Sigmoid colon (tissue), 7 donors: ENCODE measurements at regions of chr16 and their contacts with region 1.

Region 1: GRCh38 chr16:85202631-85203461 is 90.6 kb upstream of the CIBAR2 start:
- DNase-seq: peak; percentile 98
- H3K4me3 ChIP-seq: no peak overlapping the region
- H3K27ac ChIP-seq: peak overlapping the region; percentile 77 to 90 (median 83)
- H3K4me1 ChIP-seq: peaks cover 0 to 98% (median 88%) of the 10 kb centered on the region in 4 donors
- H3K27me3 ChIP-seq: no peaks in the 10 kb centered on the region
- CTCF ChIP-seq: no peak
- EP300 ChIP-seq: no peak
- POLR2A ChIP-seq: no peak

Region 2: DNA sequence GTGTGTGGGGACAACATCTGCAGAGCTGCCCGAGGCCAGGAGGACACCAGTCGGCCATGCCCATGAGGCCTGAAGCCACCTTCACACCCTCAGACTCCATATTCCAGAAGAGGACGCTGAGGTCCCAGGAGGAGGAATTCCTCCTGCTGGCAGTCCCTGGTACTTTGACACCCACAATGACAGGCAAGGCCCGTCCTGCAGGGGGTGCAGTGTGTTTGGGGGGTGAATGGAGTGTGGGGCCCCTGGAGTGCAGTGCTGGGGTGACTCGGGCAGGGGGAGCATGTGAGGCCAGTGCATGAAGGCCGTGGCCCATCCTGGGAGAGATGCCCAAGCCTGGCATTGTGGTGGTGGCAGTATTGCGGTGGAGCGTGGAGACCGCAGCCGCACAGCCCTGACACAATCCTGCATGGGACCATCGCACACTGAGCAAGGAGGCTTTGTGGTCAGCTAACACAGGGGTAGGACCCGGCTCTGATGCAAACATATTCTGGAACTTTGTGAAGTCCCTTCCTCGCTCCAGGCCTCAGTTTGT is 243.7 kb before region 1 on chr16:
- intact Hi-C with region 1: no loop called
- DNase-seq: no peak
- H3K4me3 ChIP-seq: no peak overlapping the region
- H3K27ac ChIP-seq: no peak overlapping the region
- H3K4me1 ChIP-seq: peaks cover 0 to 3% (median 0%) of the 10 kb centered on the region in 4 donors
- H3K27me3 ChIP-seq: no peaks in the 10 kb centered on the region
- CTCF ChIP-seq: no peak
- EP300 ChIP-seq: no peak
- POLR2A ChIP-seq: no peak

Region 3: DNA sequence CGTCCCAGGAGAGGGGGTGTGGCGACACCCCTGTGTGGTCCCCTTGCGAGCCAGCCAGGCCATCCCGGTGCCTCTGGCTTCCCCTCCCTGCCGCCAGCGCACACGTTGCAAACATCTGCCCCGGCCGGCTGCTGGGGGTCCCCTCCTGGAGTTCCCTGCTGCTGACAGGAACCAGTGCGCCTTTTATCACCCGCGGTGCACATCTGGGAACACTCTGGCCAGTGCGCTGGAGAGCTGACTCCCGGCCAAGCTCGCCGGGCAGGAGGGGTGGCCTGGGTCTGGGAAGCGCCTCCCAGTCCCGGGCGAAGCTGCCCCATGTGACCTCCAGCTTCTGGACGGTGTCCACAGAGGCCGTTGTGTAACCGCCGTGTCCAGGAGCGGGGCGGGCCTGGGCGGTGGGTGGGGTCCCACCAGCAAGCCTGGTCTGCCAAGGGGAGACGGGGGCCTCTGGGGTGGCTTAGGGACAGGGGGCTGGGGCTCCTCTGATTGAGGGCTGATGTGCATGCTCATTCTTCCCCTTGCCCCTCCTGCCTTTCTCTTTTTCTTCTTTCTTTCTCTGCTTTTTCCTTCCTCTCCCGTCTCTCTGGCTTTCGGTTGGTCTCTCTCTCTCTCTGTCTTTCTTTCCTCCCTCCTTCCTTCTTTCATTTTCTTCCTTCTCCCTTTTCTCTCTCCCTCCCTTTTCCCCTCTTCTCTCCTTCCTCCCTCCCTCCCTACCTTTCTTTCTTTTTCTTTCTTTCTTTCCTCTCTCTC is 65.3 kb before region 1 on chr16:
- intact Hi-C with region 1: loop called (anchors 5 kb)
- DNase-seq: peak; percentile 99
- H3K4me3 ChIP-seq: peak overlapping the region; percentile 20 to 42 (median 35)
- H3K27ac ChIP-seq: peak overlapping the region; percentile 72 to 85 (median 80)
- H3K4me1 ChIP-seq: peaks cover 0 to 34% (median 30%) of the 10 kb centered on the region in 4 donors
- H3K27me3 ChIP-seq: no peaks in the 10 kb centered on the region
- CTCF ChIP-seq: no peak
- EP300 ChIP-seq: peak in 2 of 4 donors; percentile 79 to 87
- POLR2A ChIP-seq: no peak

Region 4: DNA sequence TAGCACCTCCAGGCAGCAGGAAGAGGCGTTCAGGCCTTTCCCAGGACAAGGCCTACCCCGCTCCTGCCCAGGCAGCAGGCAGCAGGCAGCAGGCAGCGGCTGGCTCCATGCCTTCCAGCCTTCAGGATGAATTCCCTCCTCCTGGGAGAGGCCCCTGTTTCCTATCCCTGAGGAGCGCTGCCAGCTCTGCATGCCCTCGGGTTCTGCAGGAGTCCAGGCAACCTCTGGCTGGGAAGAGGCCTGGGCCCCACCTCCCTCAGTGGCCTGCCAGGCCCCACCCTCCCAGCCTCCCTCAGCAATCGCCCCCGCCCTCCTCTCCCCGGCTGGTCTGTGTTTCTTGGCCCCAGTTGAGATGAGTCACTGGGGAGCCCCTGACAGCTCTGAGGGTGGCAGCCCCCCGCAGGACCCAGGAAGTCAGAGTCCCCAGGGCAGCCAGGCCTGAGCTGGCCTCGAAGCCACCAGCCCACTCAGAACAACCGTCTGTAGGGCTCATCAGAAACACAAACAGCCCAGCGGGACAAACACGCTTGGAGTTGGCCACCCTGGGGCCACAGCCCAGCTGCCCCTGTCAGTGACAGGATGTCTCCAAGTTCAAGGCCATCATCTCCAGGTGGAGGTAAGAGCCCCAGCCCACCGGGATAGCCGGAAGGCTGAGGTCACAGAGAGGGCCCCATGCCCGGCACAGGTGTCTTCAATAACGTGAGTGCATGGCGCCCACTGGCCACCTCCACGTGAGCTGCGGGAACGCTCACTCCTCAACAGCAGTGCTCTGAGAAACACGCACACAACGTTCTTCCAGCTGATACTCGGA is 51.0 kb before region 1 on chr16:
- intact Hi-C with region 1: loop called (anchors 5 kb)
- DNase-seq: peak; percentile 98
- H3K4me3 ChIP-seq: no peak overlapping the region
- H3K27ac ChIP-seq: peak overlapping the region; percentile 77 to 84 (median 80)
- H3K4me1 ChIP-seq: peaks cover 0 to 45% (median 34%) of the 10 kb centered on the region in 4 donors
- H3K27me3 ChIP-seq: no peaks in the 10 kb centered on the region
- CTCF ChIP-seq: no peak
- EP300 ChIP-seq: no peak
- POLR2A ChIP-seq: no peak

Region 5: GRCh38 chr16:85168732-85169256 is 34.1 kb before region 1 on chr16:
- intact Hi-C with region 1: loop called (anchors 5 kb)
- DNase-seq: peak; percentile 90
- H3K4me3 ChIP-seq: peak overlapping the region; percentile 3 to 42 (median 34)
- H3K27ac ChIP-seq: peak overlapping the region; percentile 53 to 75 (median 68)
- H3K4me1 ChIP-seq: peaks cover 0 to 87% (median 75%) of the 10 kb centered on the region in 4 donors
- H3K27me3 ChIP-seq: no peaks in the 10 kb centered on the region
- CTCF ChIP-seq: no peak
- EP300 ChIP-seq: no peak
- POLR2A ChIP-seq: no peak

Region 6: GRCh38 chr16:85809645-85810044 is 606.8 kb after region 1 on chr16:
- intact Hi-C with region 1: no loop called
- DNase-seq: no peak
- H3K4me3 ChIP-seq: no peak overlapping the region
- H3K27ac ChIP-seq: no peak overlapping the region
- H3K4me1 ChIP-seq: no peaks in the 10 kb centered on the region
- H3K27me3 ChIP-seq: peaks cover 0 to 6% (median 0%) of the 10 kb centered on the region in 3 donors
- CTCF ChIP-seq: no peak
- EP300 ChIP-seq: no peak
- POLR2A ChIP-seq: no peak